Adrenal gland (tissue), 19 donors: ENCODE measurements at regions of chr10 and their contacts with region 1.

Region 1: GRCh38 chr10:14954001-14954770 is at the start of gene DCLRE1C:
- DNase-seq: peak; percentile 90 to 94 (median 93)
- H3K4me3 ChIP-seq: peak within 1 kb of the TSS; percentile 24 to 96 (median 62)
- H3K27ac ChIP-seq: peak within 1 kb of the TSS; percentile 76 to 95 (median 82)
- H3K4me1 ChIP-seq: peaks cover 8 to 19% of the 10 kb centered on the region in 2 donors
- H3K27me3 ChIP-seq: no peaks in the 10 kb centered on the region
- CTCF ChIP-seq: no peak
- POLR2A ChIP-seq: peak in 1 of 2 donors; percentile 68
- total RNA-seq, gene DCLRE1C: 2.9 to 13.4 (median 8.6) TPM

Region 2: GRCh38 chr10:15092855-15093408 is 138.7 kb after region 1 on chr10:
- intact Hi-C with region 1: loop called in 1 of 2 experiments (anchors 5 kb)
- DNase-seq: no peak
- H3K4me3 ChIP-seq: no peak overlapping the region
- H3K27ac ChIP-seq: no peak overlapping the region
- H3K4me1 ChIP-seq: peaks cover under 1 to 13% of the 10 kb centered on the region in 2 donors
- H3K27me3 ChIP-seq: no peaks in the 10 kb centered on the region
- CTCF ChIP-seq: no peak
- POLR2A ChIP-seq: no peak